ENCODE measurements at regions of chr17 and their contacts with region 1.

Region 1: DNA sequence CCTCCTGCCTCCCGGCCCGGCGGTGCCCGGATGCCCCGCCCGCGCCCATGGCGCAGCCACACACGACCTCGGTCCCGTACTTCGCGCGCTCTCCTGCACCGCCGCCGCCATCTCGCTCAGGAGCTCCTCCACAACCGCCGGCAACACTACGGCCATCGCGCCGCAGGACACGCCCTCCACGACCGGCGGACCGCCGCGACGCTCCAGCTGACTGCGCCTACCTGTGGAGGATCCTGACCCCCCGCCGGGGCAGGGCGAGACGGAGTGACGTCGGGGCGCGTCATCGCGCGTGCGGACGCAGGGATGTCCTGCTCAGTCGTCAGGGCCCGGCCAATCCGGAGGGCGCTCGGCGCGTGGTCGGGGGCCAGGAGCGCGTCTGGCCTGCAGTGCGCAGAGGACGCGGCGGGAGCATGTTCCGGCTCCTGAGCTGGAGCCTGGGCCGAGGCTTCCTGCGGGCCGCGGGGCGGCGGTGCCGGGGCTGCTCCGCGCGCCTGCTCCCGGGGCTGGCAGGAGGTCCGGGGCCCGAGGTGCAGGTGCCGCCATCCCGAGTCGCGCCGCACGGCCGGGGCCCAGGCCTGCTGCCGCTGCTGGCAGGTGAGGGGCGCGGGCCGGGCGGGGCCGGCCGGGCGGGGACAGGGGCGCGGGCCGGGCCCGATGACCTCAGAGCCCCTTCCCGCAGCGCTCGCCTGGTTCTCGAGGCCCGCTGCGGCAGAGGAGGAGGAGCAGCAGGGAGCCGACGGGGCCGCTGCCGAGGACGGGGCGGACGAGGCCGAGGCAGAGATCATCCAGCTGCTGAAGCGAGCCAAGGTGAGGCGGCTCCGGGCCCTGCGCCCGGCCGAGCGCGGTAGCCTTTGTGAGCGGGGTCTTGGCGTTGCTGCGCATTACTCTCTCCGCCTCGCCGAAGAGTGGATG is at the starts of genes TTC19 and ZSWIM7:
- DNase-seq: peak; percentile 90 to 97 (median 96)
- H3K4me3 ChIP-seq: peak within 1 kb of the TSS; percentile 58 to 92 (median 86)
- H3K27ac ChIP-seq: peak within 1 kb of the TSS; percentile 55 to 92
- H3K4me1 ChIP-seq: peaks cover 9 to 24% (median 18%) of the 10 kb centered on the region in 4 experiments
- H3K27me3 ChIP-seq: no peaks in the 10 kb centered on the region

Region 2: GRCh38 chr17:15944759-15945529 is 54.8 kb before region 1 on chr17 and contains the start of gene ADORA2B:
- CTCF ChIA-PET with region 1: interaction called, 14 read pairs
- POLR2A ChIA-PET with region 1: interaction called, 5 read pairs
- DNase-seq: peak in 2 of 3 donors; percentile 73 to 77
- H3K4me3 ChIP-seq: peak within 1 kb of the TSS; percentile 36 to 86 (median 73)
- H3K27ac ChIP-seq: no peak within 1 kb of the TSS
- H3K4me1 ChIP-seq: peaks cover 0 to 49% (median 29%) of the 10 kb centered on the region in 4 experiments
- H3K27me3 ChIP-seq: peaks cover 0 to 22% (median 0%) of the 10 kb centered on the region in 5 experiments

Region 3: GRCh38 chr17:15977894-15978293 is 21.8 kb before region 1 on chr17:
- CTCF ChIA-PET with region 1: no interaction called
- POLR2A ChIA-PET with region 1: no interaction called
- DNase-seq: no peak
- H3K4me3 ChIP-seq: no peak overlapping the region
- H3K27ac ChIP-seq: no peak overlapping the region
- H3K4me1 ChIP-seq: peaks cover 8 to 23% (median 20%) of the 10 kb centered on the region in 4 experiments
- H3K27me3 ChIP-seq: no peaks in the 10 kb centered on the region

Region 4: DNA sequence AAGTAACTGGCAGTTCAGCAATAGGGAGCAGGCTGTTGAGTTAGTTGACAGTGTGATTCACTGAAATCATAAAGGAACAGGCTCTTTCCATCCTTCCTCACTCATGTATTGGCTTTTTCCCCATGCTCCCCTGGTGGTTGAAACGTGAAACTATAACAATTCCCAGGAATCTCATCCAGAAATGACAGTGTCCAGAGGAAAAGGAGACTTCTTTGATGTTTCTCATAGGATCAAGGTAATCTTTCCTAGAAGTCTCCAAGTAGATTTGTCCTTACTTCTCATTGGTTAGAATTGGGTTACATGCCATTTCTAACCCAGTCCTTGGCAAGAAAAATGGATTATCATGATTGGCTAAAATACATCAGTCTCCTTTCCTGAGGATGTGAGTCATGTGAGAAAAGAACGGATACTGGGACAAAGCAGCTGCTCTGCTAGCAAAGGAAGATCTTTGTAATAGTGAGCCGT is 14.3 kb after region 1 on chr17:
- CTCF ChIA-PET with region 1: interaction called, 10 read pairs
- POLR2A ChIA-PET with region 1: no interaction called
- DNase-seq: no peak
- H3K4me3 ChIP-seq: no peak overlapping the region
- H3K27ac ChIP-seq: no peak overlapping the region
- H3K4me1 ChIP-seq: no peaks in the 10 kb centered on the region
- H3K27me3 ChIP-seq: no peaks in the 10 kb centered on the region

Region 5: DNA sequence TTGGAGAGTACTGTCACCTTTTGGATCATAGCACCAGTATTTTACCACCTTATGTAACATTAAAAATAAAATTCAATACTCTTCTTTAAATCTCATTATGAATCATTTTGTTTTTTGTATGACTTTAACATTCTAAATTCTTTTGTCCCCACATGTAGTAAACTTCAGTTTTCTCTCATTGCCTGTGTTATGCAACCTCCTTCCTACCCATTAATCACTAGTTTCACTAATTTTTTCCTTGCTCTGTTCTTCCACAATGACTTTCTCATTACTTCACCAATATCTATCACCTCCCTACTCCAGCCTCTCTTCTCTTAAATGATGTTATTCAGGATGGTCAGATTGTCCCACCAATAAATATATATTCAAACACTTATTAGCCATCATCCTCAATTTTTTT is 68.6 kb after region 1 on chr17:
- CTCF ChIA-PET with region 1: no interaction called
- POLR2A ChIA-PET with region 1: no interaction called
- DNase-seq: no peak
- H3K4me3 ChIP-seq: no peak overlapping the region
- H3K27ac ChIP-seq: no peak overlapping the region
- H3K4me1 ChIP-seq: no peaks in the 10 kb centered on the region
- H3K27me3 ChIP-seq: no peaks in the 10 kb centered on the region